ENCODE measurements at regions of chr3 and their contacts with region 1.

Region 1: DNA sequence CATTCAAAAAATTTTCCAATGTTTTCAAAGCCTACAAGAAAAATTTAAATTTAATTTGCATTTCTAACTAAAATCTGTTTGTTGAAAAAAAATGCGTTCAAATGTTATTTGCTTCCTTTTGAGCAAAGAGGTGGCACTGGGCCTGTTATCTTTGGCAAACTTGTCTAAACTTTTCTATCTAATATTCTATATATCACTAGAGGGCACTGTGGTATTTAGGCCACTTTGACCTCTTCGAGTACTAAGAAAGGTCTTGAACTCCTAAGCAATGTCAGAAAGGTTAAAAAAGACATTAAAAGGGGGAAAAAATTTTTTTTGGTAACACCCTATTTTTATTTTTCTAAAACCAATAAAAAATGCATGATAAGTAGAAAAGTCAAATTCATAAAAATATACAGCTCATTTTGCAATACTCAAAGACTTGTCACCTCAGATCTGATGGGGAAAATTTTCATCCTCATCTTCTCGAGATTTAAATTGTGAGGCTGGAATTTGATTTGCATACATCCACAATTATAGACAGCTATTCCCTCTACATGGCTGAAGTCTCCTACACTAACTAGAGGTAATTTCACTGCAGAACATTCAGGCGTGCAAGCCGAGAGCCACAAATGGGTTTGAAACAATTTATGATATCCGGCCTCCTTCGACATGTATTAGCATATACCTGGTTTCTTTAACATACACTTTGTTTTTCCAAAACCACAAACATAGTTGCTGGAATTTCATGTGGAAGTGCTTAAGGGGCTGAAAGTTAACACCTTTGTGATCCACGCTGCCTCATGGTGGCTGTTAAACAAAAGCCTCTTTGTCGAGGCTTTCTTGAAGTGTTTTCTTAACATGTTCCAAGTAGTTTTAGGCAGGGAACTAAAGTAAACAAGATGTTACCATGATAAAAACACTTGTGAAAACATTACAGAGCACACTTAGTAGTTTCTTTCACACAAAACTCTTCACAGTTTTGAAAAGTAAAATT is 576.4 kb downstream of the FOXP1 start:
- DNase-seq: peak in 1 of 6 donors; percentile 29
- ATAC-seq: peak; percentile 71 to 87 (median 83)
- H3K4me3 ChIP-seq: no peak overlapping the region
- H3K27ac ChIP-seq: peak overlapping the region in 2 of 4 donors; percentile 27 to 60
- H3K4me1 ChIP-seq: peaks cover 30 to 55% (median 48%) of the 10 kb centered on the region in 3 donors
- H3K27me3 ChIP-seq: no peaks in the 10 kb centered on the region
- CTCF ChIP-seq: peak in 1 of 4 donors; percentile 17

Region 2: DNA sequence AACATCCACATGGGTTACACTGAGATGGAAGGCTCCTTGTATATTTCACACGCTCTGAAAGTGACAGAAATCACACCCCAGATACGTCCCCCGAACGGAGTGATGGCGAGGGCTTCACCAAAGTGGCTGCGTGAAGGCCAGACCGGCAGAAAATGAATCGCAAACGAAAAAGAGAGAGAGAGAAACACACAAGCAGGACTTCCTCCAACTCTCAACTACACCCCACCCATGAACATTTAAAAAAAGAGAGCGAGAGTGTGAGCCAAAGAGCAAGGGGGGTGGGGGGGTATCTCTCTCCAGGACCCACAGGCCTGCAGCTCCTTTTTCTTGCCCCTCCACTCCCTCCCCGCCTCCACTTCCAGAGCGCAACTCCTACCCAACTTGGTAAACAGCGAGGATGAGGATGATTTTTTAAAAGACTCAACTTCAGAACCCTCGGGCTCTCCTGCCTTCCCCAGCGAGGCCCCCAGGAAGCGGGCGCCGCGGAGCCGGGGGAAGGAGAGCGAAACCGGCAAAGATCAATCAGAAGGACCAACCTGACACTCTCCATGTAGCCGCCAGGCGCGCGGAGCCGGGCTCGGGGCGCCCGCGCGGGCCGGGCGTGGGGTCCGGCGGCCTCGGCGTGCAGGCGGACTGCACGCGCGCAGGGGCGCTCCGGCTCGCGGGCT is 57.3 kb after region 1 on chr3:
- intact Hi-C with region 1: loop called in 1 of 3 experiments (anchors 10 kb)
- DNase-seq: peak; percentile 38 to 80 (median 58)
- ATAC-seq: peak; percentile 43 to 69 (median 53)
- H3K4me3 ChIP-seq: peak overlapping the region; percentile 22 to 58 (median 44)
- H3K27ac ChIP-seq: peak overlapping the region; percentile 67 to 95 (median 91)
- H3K4me1 ChIP-seq: peaks cover 24 to 59% (median 49%) of the 10 kb centered on the region in 3 donors
- H3K27me3 ChIP-seq: no peaks in the 10 kb centered on the region
- CTCF ChIP-seq: no peak

Region 3: DNA sequence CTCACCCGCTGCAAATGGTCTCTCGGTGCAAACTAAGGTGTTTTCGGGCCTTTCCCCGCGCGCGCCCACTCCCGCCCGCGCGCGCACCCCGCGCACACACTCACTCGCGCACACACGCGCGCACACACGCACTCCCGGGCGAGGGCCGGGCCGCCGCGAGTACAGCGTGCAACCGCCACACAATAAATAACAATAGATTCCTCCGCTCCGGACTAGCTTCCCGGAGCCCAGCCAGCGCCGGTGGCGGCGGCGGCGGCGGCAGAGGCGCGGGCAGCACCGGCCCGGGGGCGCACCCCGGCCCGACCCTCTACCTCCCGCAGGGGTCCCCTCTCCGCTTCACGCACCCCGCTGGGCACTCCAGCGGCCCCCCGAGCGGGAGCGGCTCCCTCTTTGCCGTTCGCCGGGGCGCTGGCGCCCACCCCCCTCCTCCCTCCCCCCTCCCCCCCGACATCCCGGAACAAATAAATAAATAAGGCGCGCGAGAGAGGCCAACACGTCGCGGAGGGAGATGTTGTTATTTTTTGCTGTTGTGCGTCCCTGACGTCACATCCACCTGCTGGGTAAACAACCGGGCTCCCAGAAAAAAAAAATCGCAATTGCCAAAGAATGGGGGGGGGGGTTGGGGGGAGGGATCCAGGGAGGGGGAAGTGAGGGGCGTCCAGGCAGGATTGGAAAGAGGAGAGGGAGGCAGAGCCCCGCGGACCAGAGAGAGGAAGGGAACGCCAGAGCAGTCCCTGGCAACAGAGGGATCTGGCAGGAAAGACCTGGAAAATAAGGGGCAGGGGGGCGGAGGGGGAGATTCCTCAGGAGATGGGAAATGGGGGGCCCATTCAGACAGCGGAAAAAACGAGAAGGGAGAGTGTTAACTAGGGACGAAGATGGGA is 576.7 kb after region 1 on chr3 and contains the start of gene FOXP1:
- intact Hi-C with region 1: loop called in 1 of 3 experiments (anchors 10 kb)
- DNase-seq: peak; percentile 76 to 88 (median 82)
- ATAC-seq: peak; percentile 51 to 79 (median 72)
- H3K4me3 ChIP-seq: peak within 1 kb of the TSS; percentile 61 to 92 (median 76)
- H3K27ac ChIP-seq: peak within 1 kb of the TSS; percentile 94 to 98 (median 96)
- H3K4me1 ChIP-seq: peaks cover 24 to 32% (median 30%) of the 10 kb centered on the region in 3 donors
- H3K27me3 ChIP-seq: no peaks in the 10 kb centered on the region
- CTCF ChIP-seq: no peak
- total RNA-seq, gene FOXP1: 34.8 to 74.1 (median 45.1) TPM

Measured in pancreas (tissue), 10 donors.